Activated CD8-positive, alpha-beta T cell treated with anti-CD3 and anti-CD28 coated beads for 36 hours (primary cell): ENCODE measurements at regions of chr2 and their contacts with region 1.

Region 1: GRCh38 chr2:39513641-39514094 is 76.6 kb upstream of the MAP4K3 start:
- DNase-seq: peak; percentile 85
- ATAC-seq: peak; percentile 83
- H3K4me3 Mint-ChIP-seq: no peak overlapping the region
- H3K27ac Mint-ChIP-seq: peak overlapping the region; percentile 77
- H3K4me1 Mint-ChIP-seq: peaks cover 50% of the 10 kb centered on the region
- H3K27me3 Mint-ChIP-seq: peaks cover 1% of the 10 kb centered on the region
- CTCF ChIP-seq: peak; percentile 40

Region 2: GRCh38 chr2:39492095-39492590 is 21.5 kb before region 1 on chr2:
- CTCF ChIA-PET with region 1: interaction called, 4 read pairs
- POLR2A ChIA-PET with region 1: interaction called, 12 read pairs
- intact Hi-C with region 1: loop called (anchors 1 kb)
- DNase-seq: peak; percentile 69
- ATAC-seq: peak; percentile 91
- H3K4me3 Mint-ChIP-seq: peak overlapping the region; percentile 51
- H3K27ac Mint-ChIP-seq: peak overlapping the region; percentile 84
- H3K4me1 Mint-ChIP-seq: peaks cover 30% of the 10 kb centered on the region
- H3K27me3 Mint-ChIP-seq: peaks cover 2% of the 10 kb centered on the region
- CTCF ChIP-seq: no peak